Posterior cingulate gyrus (tissue), 11 donors: ENCODE measurements at regions of chr19 and their contacts with region 1.

Region 1: GRCh38 chr19:4342615-4343369 is 570 bp upstream of the MPND start:
- DNase-seq: peak; percentile 93 to 100 (median 96)

Region 2: DNA sequence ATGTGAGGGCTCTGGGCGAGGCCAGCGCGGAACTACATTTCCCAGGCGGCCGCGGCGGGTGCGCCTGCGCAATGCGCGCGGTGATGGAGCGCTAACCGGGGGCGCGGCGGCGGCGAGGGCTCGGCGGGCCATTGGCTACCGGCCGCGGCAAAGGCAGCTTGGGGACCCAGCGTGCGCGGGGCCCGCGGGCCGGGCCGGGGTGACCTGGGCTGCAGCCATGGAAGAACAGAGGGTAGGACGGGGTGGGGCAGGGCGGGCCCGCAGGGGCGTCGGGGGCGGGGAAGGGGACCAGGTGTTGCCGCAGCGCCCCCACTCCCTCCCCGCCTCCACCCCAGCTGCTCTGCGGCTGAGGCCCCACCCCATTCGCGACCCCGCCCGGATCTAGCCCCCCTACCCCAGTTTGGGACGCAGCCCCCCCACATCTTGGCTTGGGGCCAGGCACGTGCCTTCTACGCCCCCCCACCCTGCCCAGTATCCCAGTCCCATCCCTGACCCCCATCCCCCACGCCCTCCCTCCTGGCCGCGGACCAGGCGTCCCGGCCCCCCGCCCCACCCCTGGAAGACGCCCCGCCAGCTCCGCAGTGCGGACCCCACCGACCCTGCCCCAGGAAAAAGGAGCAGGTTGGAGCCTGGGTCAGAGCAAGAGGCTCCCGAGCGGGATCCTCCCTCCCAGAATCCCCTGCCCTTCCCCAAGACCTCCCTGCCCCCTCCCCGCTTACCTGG is 38.1 kb before region 1 on chr19 and contains the start of gene FSD1:
- intact Hi-C with region 1: no loop called
- DNase-seq: peak in 9 of 10 donors; percentile 40 to 95 (median 62)

Region 3: GRCh38 chr19:4328243-4328990 is 14.4 kb before region 1 on chr19:
- intact Hi-C with region 1: loop called (anchors 2 kb)
- DNase-seq: peak; percentile 94 to 100 (median 97)